Caco-2 (cell line): ENCODE measurements at regions of chr2 and their contacts with region 1.

Region 1: GRCh38 chr2:162123806-162124758 is 28.0 kb downstream of the GCG start:
- DNase-seq: peak in 1 of 2 experiments; percentile 60
- H3K4me3 ChIP-seq: no peak overlapping the region
- H3K4me3 Mint-ChIP-seq: no peak overlapping the region
- H3K27ac Mint-ChIP-seq: no peak overlapping the region
- H3K4me1 ChIP-seq: peaks cover 27% of the 10 kb centered on the region
- H3K4me1 Mint-ChIP-seq: peaks cover 18% of the 10 kb centered on the region
- H3K27me3 ChIP-seq: no peaks in the 10 kb centered on the region; the same call in 1 of the 2 replicates
- H3K27me3 Mint-ChIP-seq: no peaks in the 10 kb centered on the region
- CTCF ChIP-seq: peak; percentile 52 to 53

Region 2: GRCh38 chr2:161586517-161587167 is 537.4 kb before region 1 on chr2:
- CTCF ChIA-PET with region 1: no interaction called
- POLR2A ChIA-PET with region 1: no interaction called
- intact Hi-C with region 1: loop called (anchors 1 kb)
- DNase-seq: no peak
- H3K4me3 ChIP-seq: no peak overlapping the region
- H3K4me3 Mint-ChIP-seq: no peak overlapping the region
- H3K27ac Mint-ChIP-seq: no peak overlapping the region
- H3K4me1 ChIP-seq: no peaks in the 10 kb centered on the region
- H3K4me1 Mint-ChIP-seq: no peaks in the 10 kb centered on the region
- H3K27me3 ChIP-seq: no peaks in the 10 kb centered on the region
- H3K27me3 Mint-ChIP-seq: peaks cover 7% of the 10 kb centered on the region
- CTCF ChIP-seq: peak; percentile 54 to 66

Region 3: GRCh38 chr2:161946489-161947107 is 177.5 kb before region 1 on chr2:
- CTCF ChIA-PET with region 1: no interaction called
- POLR2A ChIA-PET with region 1: no interaction called
- intact Hi-C with region 1: loop called (anchors 1 kb)
- DNase-seq: peak in 1 of 2 experiments; percentile 28
- H3K4me3 ChIP-seq: no peak overlapping the region
- H3K4me3 Mint-ChIP-seq: no peak overlapping the region
- H3K27ac Mint-ChIP-seq: no peak overlapping the region
- H3K4me1 ChIP-seq: no peaks in the 10 kb centered on the region
- H3K4me1 Mint-ChIP-seq: no peaks in the 10 kb centered on the region
- H3K27me3 ChIP-seq: no peaks in the 10 kb centered on the region; the same call in 1 of the 2 replicates
- H3K27me3 Mint-ChIP-seq: peaks cover 4% of the 10 kb centered on the region
- CTCF ChIP-seq: peak; percentile 56 to 67

Region 4: GRCh38 chr2:161988589-161988988 is 135.5 kb before region 1 on chr2:
- CTCF ChIA-PET with region 1: interaction called, 5 read pairs
- POLR2A ChIA-PET with region 1: no interaction called
- intact Hi-C with region 1: loop called (anchors 5 kb)
- DNase-seq: no peak
- H3K4me3 ChIP-seq: no peak overlapping the region
- H3K4me3 Mint-ChIP-seq: no peak overlapping the region
- H3K27ac Mint-ChIP-seq: no peak overlapping the region
- H3K4me1 ChIP-seq: no peaks in the 10 kb centered on the region
- H3K4me1 Mint-ChIP-seq: no peaks in the 10 kb centered on the region
- H3K27me3 ChIP-seq: no peaks in the 10 kb centered on the region
- H3K27me3 Mint-ChIP-seq: no peaks in the 10 kb centered on the region
- CTCF ChIP-seq: peak in 1 of 2 experiments; percentile 44

Region 5: DNA sequence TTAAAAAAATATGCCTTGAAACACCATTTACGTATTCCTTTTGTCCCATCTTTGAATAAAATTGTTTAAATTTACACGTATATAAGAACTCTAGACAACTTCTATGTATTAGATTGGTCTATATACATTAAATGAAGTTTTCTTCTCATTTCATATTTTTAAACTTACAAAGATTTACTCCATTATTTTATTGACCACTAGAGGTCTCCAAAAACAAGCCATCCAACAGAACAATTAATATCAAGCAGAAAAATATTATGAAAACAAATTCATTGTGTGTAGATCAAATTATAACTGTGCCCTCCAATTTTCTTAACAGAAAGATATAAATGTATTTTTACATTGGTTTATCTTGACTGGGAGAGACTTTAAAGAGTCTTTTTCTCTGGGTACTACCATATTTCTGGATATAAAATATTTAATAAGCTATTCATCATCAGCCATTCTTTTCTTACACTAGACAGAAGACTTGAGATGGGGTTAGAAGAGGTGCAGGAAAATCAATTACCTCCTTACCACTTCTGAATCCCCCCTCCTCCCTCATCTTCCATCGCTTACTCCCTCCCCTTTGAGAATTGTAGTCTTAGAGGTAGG is 116.5 kb before region 1 on chr2:
- CTCF ChIA-PET with region 1: interaction called, 3 read pairs
- POLR2A ChIA-PET with region 1: no interaction called
- intact Hi-C with region 1: loop called (anchors 1 kb)
- DNase-seq: no peak
- H3K4me3 ChIP-seq: no peak overlapping the region
- H3K4me3 Mint-ChIP-seq: no peak overlapping the region
- H3K27ac Mint-ChIP-seq: no peak overlapping the region
- H3K4me1 ChIP-seq: no peaks in the 10 kb centered on the region
- H3K4me1 Mint-ChIP-seq: peaks cover 11% of the 10 kb centered on the region
- H3K27me3 ChIP-seq: no peaks in the 10 kb centered on the region
- H3K27me3 Mint-ChIP-seq: no peaks in the 10 kb centered on the region
- CTCF ChIP-seq: peak; percentile 39 to 63

Region 6: GRCh38 chr2:162073888-162074645 is 50.0 kb before region 1 on chr2 and contains the start of gene DPP4:
- CTCF ChIA-PET with region 1: no interaction called
- POLR2A ChIA-PET with region 1: no interaction called
- intact Hi-C with region 1: loop called (anchors 1 kb)
- DNase-seq: peak; percentile 87 to 89
- H3K4me3 ChIP-seq: peak within 1 kb of the TSS; percentile 95
- H3K4me3 Mint-ChIP-seq: peak within 1 kb of the TSS; percentile 87
- H3K27ac Mint-ChIP-seq: peak within 1 kb of the TSS; percentile 54
- H3K4me1 ChIP-seq: peaks cover 55% of the 10 kb centered on the region
- H3K4me1 Mint-ChIP-seq: peaks cover 39% of the 10 kb centered on the region
- H3K27me3 ChIP-seq: no peaks in the 10 kb centered on the region
- H3K27me3 Mint-ChIP-seq: no peaks in the 10 kb centered on the region
- CTCF ChIP-seq: no peak
- total RNA-seq, gene DPP4: 190 and 199 TPM in 2 replicates

Region 7: GRCh38 chr2:162138310-162138709 is 14.2 kb after region 1 on chr2:
- CTCF ChIA-PET with region 1: no interaction called
- POLR2A ChIA-PET with region 1: no interaction called
- intact Hi-C with region 1: no loop called
- DNase-seq: no peak
- H3K4me3 ChIP-seq: no peak overlapping the region
- H3K4me3 Mint-ChIP-seq: no peak overlapping the region
- H3K27ac Mint-ChIP-seq: no peak overlapping the region
- H3K4me1 ChIP-seq: no peaks in the 10 kb centered on the region
- H3K4me1 Mint-ChIP-seq: no peaks in the 10 kb centered on the region
- H3K27me3 ChIP-seq: no peaks in the 10 kb centered on the region
- H3K27me3 Mint-ChIP-seq: no peaks in the 10 kb centered on the region
- CTCF ChIP-seq: no peak